ENCODE measurements at regions of chr15 and their contacts with region 1.

Region 1: GRCh38 chr15:101307048-101307896 is 12.2 kb upstream of the SNRPA1 start:
- DNase-seq: peak in 1 of 3 donors; percentile 34
- ATAC-seq: peak; percentile 4 to 23 (median 14)
- H3K4me3 ChIP-seq: no peak overlapping the region
- H3K27ac ChIP-seq: no peak overlapping the region
- H3K4me1 ChIP-seq: no peaks in the 10 kb centered on the region
- H3K27me3 ChIP-seq: no peaks in the 10 kb centered on the region
- CTCF ChIP-seq: no peak
- POLR2A ChIP-seq: no peak

Region 2: GRCh38 chr15:101357331-101357730 is 50.1 kb after region 1 on chr15:
- intact Hi-C with region 1: loop called in 1 of 2 experiments (anchors 2 kb)
- DNase-seq: no peak
- ATAC-seq: peak; percentile 25 to 52 (median 49)
- H3K4me3 ChIP-seq: no peak overlapping the region
- H3K27ac ChIP-seq: no peak overlapping the region
- H3K4me1 ChIP-seq: no peaks in the 10 kb centered on the region
- H3K27me3 ChIP-seq: no peaks in the 10 kb centered on the region
- CTCF ChIP-seq: no peak
- POLR2A ChIP-seq: no peak

Region 3: GRCh38 chr15:101499863-101500713 is 192.8 kb after region 1 on chr15:
- intact Hi-C with region 1: loop called in 1 of 2 experiments (anchors 10 kb)
- DNase-seq: peak; percentile 88 to 95 (median 94)
- ATAC-seq: peak; percentile 71 to 87 (median 85)
- H3K4me3 ChIP-seq: no peak overlapping the region
- H3K27ac ChIP-seq: peak overlapping the region; percentile 64 to 88 (median 84)
- H3K4me1 ChIP-seq: peaks cover 0 to 29% (median 12%) of the 10 kb centered on the region in 4 donors
- H3K27me3 ChIP-seq: no peaks in the 10 kb centered on the region
- CTCF ChIP-seq: peak in 1 of 4 donors; percentile 24
- POLR2A ChIP-seq: peak; percentile 14

Region 4: DNA sequence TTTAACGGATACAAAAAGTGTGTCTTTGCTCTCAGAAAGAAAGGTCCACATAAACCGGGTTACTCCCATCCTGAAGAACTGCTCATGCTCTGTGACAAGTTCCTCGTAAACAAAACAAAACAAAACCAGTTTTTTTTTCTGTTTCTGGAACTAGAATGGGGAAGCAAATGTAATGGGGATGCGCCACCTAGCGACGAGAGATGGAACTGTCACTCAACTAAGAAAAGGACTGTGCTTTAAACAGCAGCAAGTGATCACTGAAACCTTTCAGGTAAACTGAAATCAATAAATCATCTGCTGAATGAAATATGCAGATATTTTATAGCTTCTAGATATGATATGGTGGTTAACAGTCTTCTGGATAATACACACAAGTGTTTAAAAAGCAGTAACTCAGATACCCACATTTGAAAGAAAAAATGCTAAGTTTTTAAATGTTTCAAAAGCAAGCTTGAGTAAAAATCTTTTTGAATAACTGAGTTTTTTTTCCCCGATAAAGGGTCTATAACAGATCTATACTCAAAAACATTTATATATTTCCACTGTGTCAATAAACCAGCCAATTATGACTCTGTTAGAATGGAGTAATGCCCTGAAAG is 334.0 kb after region 1 on chr15:
- intact Hi-C with region 1: loop called in 1 of 2 experiments (anchors 10 kb)
- DNase-seq: peak in 2 of 3 donors; percentile 60 to 76
- ATAC-seq: peak; percentile 81 to 90 (median 83)
- H3K4me3 ChIP-seq: no peak overlapping the region
- H3K27ac ChIP-seq: peak overlapping the region; percentile 52 to 63 (median 54)
- H3K4me1 ChIP-seq: peaks cover 0 to 15% (median 7%) of the 10 kb centered on the region in 4 donors
- H3K27me3 ChIP-seq: no peaks in the 10 kb centered on the region
- CTCF ChIP-seq: peak; percentile 93 to 98 (median 96)
- POLR2A ChIP-seq: no peak

Measured in right lobe of liver (tissue), 6 donors.